ENCODE measurements at regions of chr9 and their contacts with region 1.

Region 1: DNA sequence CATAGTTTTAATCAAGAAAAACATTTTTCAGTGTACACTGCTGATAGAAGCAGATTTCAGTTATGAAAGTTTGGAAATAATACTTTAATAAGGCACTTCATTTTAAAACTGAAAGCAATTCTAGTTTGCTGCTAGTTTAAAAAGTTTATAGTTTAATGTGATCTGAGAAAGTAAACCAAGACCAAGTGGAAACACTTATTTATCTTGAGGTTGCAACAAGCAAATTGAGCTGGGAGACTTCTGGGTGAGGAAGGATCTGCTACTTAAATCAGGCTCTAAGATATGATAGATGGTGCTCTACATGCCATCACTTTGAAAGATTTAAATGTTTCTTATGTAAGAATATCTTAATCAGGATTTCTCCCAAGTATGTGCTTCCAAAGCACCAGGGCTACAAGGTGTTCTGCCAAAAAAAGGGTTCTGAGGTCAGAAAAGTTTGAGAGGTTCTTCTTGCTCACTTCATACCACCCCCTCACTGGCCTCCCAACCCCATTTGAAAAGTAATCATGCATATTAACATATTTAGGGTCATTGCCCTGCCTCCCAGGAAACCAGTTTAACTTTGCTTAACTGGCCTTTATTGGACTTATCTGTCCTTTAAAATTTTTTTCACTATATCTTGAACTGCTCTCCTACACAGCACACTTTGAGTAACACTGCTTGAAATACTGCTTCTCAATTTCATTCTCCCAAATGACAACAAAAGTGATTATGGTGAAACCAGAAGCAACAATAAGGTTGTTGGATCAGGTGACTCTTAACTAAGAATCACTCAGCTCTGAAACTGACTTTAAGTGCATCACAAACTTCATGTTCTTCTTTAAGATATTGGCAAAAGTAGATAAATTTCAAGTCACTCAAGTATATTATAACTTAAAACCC is 15.5 kb downstream of the SLC44A1 start:
- DNase-seq: no peak
- ATAC-seq: peak in 2 of 4 donors; percentile 26 to 57
- H3K4me3 ChIP-seq: no peak overlapping the region
- H3K27ac ChIP-seq: no peak overlapping the region
- H3K4me1 ChIP-seq: peaks cover 13% of the 10 kb centered on the region
- H3K27me3 ChIP-seq: no peaks in the 10 kb centered on the region
- CTCF ChIP-seq: no peak

Region 2: DNA sequence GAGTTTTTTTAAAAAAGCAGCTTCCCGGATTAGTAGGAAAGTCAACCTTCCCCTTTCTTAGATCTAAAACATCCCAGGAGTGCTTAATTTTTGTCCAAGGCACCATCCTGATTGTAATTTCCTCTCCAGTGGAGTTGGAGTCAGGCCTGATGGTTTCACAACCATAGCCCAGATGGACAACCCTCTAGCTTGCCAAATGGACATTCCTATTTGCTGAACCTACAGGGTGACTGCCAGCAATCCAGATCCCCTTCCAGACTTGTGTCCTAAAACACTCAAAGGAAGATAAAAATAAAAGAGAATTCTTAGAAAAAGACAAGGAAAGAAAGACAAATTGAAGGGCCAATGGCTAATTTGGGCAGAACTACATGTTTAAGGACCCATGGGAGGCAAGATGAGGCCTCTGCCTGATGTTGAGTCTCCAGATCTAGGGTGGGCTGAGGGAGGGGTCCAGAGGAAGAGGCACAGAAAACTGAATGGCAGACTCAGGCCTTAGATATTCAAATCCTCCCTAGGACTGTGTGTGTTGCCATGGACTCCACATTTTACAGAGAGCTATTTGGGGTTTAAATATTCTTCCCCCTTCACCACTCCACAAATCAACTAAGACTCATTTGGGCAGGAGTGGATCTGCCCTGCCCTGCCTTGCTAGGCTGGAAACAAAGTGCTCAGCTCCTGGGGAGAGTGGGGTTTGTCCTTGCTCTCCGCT is 54.0 kb before region 1 on chr9:
- intact Hi-C with region 1: no loop called
- DNase-seq: peak; percentile 64 to 69
- ATAC-seq: peak; percentile 91 to 98 (median 95)
- H3K4me3 ChIP-seq: no peak overlapping the region
- H3K27ac ChIP-seq: peak overlapping the region; percentile 32
- H3K4me1 ChIP-seq: peaks cover 25% of the 10 kb centered on the region
- H3K27me3 ChIP-seq: no peaks in the 10 kb centered on the region
- CTCF ChIP-seq: no peak

Region 3: DNA sequence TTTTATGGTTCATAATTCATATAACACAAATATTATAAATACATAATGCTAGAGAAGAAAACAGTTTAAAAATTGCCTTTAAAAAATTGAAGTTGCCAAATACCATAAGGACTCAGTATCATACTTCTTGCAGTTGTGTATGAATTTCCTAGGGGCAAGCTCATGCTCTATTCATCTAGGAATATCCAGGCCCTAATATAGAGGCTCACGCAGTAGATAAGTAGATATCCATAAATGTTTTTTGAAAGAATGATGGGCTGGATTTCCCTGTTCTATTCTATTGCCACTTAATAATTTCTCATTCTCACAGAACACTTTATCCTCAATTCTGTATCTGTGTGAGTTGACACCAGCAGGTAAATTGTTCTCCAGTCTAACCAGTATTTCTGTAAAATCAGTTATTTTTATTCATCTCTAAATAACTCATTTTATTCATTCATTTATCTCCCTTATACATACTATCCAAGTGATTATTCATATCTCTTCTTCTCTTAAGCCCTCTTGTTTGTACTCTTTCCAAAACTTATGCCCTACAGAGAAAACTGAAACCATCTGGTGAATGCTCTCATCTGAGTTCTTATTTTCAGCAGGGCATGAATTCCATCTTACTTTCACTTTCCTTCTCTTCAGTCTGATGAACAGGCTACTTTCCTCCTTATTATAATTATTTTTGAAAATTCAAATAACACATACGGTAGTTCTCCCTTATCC is 81.6 kb after region 1 on chr9:
- intact Hi-C with region 1: loop called in 1 of 2 experiments (anchors 10 kb)
- DNase-seq: no peak
- ATAC-seq: no peak
- H3K4me3 ChIP-seq: no peak overlapping the region
- H3K27ac ChIP-seq: no peak overlapping the region
- H3K4me1 ChIP-seq: peaks cover 2% of the 10 kb centered on the region
- H3K27me3 ChIP-seq: no peaks in the 10 kb centered on the region
- CTCF ChIP-seq: no peak